ENCODE measurements at regions of chr3 and their contacts with region 1.

Region 1: GRCh38 chr3:152298393-152299242 is 29.9 kb downstream of the MBNL1 start:
- DNase-seq: peak; percentile 88

Region 2: GRCh38 chr3:152444029-152444641 is 145.5 kb after region 1 on chr3:
- in situ Hi-C with region 1: loop called (anchors 25 kb)
- DNase-seq: peak; percentile 62

Region 3: GRCh38 chr3:152524198-152525140 is 225.9 kb after region 1 on chr3:
- in situ Hi-C with region 1: no loop called
- DNase-seq: peak; percentile 72

Measured in KBM-7 (cell line).